ENCODE measurements at regions of chr10 and their contacts with region 1.

Region 1: GRCh38 chr10:91251430-91252056 is 31.1 kb downstream of the PCGF5 start:
- DNase-seq: peak; percentile 22
- CTCF ChIP-seq: peak; percentile 74

Region 2: DNA sequence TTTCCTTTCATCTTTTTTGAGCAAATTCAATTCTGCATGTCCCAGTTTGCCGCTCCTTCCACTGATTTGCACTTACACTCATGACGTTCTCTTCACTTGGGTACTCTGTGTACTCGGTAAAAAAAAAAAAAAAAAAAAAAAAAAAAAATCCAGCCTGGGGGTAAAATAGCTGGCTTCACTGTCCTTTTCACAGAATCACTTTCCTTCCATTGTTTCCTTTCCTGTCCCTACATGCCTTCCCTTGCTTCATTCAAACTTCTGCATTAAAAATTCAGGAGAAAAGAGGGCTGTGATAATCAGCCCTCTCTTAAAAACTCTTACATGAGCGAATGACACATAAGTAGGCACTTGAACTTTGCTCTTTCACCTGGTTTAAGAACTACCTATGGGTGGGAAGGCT is 339.4 kb before region 1 on chr10:
- in situ Hi-C with region 1: loop called (anchors 10 kb)
- DNase-seq: no peak
- CTCF ChIP-seq: no peak

Region 3: GRCh38 chr10:91006001-91006751 is 245.4 kb before region 1 on chr10:
- in situ Hi-C with region 1: loop called (anchors 10 kb)
- DNase-seq: peak; percentile 26
- CTCF ChIP-seq: peak; percentile 86